GM12878 (cell line): ENCODE measurements at regions of chr4 and their contacts with region 1.

Region 1: GRCh38 chr4:78592104-78592783 is 40.7 kb downstream of the ANXA3 start:
- DNase-seq: no peak
- ATAC-seq: peak; percentile 70
- H3K4me3 ChIP-seq: no peak overlapping the region
- H3K27ac ChIP-seq: no peak overlapping the region
- H3K4me1 ChIP-seq: no peaks in the 10 kb centered on the region
- H3K27me3 ChIP-seq: no peaks in the 10 kb centered on the region
- CTCF ChIP-seq: peak; percentile 34 to 61 (median 55)
- EP300 ChIP-seq: peak in 1 of 2 experiments; percentile 77; a peak in 2 of 4 replicates
- POLR2A ChIP-seq: no peak
- RAD21 ChIP-seq: no peak; the same call in 1 of the 2 replicates

Region 2: GRCh38 chr4:78362310-78362709 is 229.9 kb before region 1 on chr4:
- CTCF ChIA-PET with region 1: no interaction called
- POLR2A ChIA-PET with region 1: no interaction called
- RAD21 ChIA-PET with region 1: no interaction called
- SMC1A ChIA-PET with region 1: no interaction called
- in situ Hi-C with region 1: no loop called
- intact Hi-C with region 1: no loop called
- DNase-seq: no peak
- ATAC-seq: no peak
- H3K4me3 ChIP-seq: no peak overlapping the region
- H3K27ac ChIP-seq: no peak overlapping the region
- H3K4me1 ChIP-seq: no peaks in the 10 kb centered on the region
- H3K27me3 ChIP-seq: no peaks in the 10 kb centered on the region; a peak in 1 of 4 replicates
- CTCF ChIP-seq: no peak
- EP300 ChIP-seq: no peak
- POLR2A ChIP-seq: no peak
- RAD21 ChIP-seq: no peak

Region 3: GRCh38 chr4:78569291-78569821 is 22.9 kb before region 1 on chr4:
- CTCF ChIA-PET with region 1: interaction called, 19 read pairs
- POLR2A ChIA-PET with region 1: interaction called, 5 read pairs
- RAD21 ChIA-PET with region 1: interaction called, 29 read pairs
- SMC1A ChIA-PET with region 1: interaction called, 69 read pairs
- in situ Hi-C with region 1: no loop called
- intact Hi-C with region 1: no loop called
- DNase-seq: no peak
- ATAC-seq: no peak
- H3K4me3 ChIP-seq: no peak overlapping the region
- H3K27ac ChIP-seq: no peak overlapping the region
- H3K4me1 ChIP-seq: peaks cover 6% of the 10 kb centered on the region
- H3K27me3 ChIP-seq: no peaks in the 10 kb centered on the region
- CTCF ChIP-seq: no peak
- EP300 ChIP-seq: no peak
- POLR2A ChIP-seq: no peak
- RAD21 ChIP-seq: no peak

Region 4: DNA sequence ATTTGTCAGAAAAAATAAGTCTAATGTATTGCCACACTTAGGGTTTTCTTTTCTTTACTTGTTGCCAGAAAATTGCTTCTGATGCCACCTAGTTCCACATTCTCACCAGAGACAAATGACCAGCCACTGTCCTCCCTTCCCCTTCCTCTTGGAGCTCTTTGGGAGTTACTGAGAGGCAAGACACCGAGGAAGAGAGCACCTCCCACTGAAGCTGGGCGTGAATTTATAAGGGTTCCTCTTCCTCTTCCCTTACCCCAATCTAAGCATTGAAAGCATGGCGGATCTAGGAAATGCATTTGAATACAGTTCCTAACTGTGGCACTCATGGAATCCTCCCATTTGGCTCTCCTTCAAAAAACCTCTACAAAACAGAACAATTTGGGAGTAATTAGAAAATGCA is 10.6 kb before region 1 on chr4:
- CTCF ChIA-PET with region 1: interaction called, 8 read pairs
- POLR2A ChIA-PET with region 1: interaction called, 5 read pairs
- RAD21 ChIA-PET with region 1: no interaction called
- SMC1A ChIA-PET with region 1: interaction called, 20 read pairs
- in situ Hi-C with region 1: no loop called
- intact Hi-C with region 1: no loop called
- DNase-seq: no peak
- ATAC-seq: no peak
- H3K4me3 ChIP-seq: no peak overlapping the region
- H3K27ac ChIP-seq: no peak overlapping the region
- H3K4me1 ChIP-seq: no peaks in the 10 kb centered on the region
- H3K27me3 ChIP-seq: no peaks in the 10 kb centered on the region
- CTCF ChIP-seq: no peak
- EP300 ChIP-seq: no peak
- POLR2A ChIP-seq: no peak
- RAD21 ChIP-seq: no peak

Region 5: GRCh38 chr4:78766650-78767049 is 174.4 kb after region 1 on chr4:
- CTCF ChIA-PET with region 1: no interaction called
- POLR2A ChIA-PET with region 1: no interaction called
- RAD21 ChIA-PET with region 1: no interaction called
- SMC1A ChIA-PET with region 1: no interaction called
- in situ Hi-C with region 1: no loop called
- intact Hi-C with region 1: no loop called
- DNase-seq: no peak
- ATAC-seq: peak; percentile 92
- H3K4me3 ChIP-seq: peak overlapping the region; percentile 14; the same call in 1 of the 2 replicates
- H3K27ac ChIP-seq: no peak overlapping the region
- H3K4me1 ChIP-seq: peaks cover 27% of the 10 kb centered on the region
- H3K27me3 ChIP-seq: no peaks in the 10 kb centered on the region
- CTCF ChIP-seq: no peak
- EP300 ChIP-seq: no peak
- POLR2A ChIP-seq: no peak
- RAD21 ChIP-seq: no peak

Region 6: DNA sequence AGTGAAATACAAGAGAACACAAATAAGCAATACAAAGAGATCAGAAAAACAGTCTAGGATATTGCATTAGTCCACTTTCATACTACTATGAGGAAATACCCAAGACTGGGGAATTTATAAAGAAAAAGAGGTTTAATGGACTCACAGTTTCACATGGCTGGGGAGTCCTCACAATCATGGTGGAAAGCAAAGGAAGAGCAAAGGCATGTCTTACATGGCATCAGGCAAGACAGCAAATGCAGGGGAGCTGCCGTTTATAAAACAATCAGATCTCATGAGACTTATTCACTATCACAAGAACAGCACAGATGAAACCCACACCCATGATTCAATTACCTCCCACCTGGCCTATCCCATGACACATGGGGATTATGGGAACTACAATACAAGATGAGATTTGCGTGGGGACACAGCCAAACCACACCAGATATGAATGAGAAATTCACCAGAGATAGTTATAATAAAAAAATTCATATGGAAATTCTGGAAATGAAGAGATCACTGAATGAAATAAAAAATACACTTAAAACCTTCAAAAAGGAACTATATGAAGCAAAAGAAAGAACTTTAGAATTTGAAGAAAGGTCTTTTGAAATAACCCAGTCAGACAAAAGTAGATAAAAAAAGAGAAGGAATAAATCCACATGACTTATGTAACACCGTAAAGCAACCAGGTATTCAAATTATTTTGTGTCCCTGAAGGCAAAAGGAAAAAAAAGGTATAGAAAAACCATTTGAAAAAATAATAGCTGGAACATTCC is 749.8 kb after region 1 on chr4:
- CTCF ChIA-PET with region 1: no interaction called
- POLR2A ChIA-PET with region 1: no interaction called
- RAD21 ChIA-PET with region 1: no interaction called
- SMC1A ChIA-PET with region 1: no interaction called
- in situ Hi-C with region 1: no loop called
- intact Hi-C with region 1: no loop called
- DNase-seq: no peak
- ATAC-seq: no peak
- H3K4me3 ChIP-seq: no peak overlapping the region
- H3K27ac ChIP-seq: no peak overlapping the region
- H3K4me1 ChIP-seq: no peaks in the 10 kb centered on the region
- H3K27me3 ChIP-seq: no peaks in the 10 kb centered on the region
- CTCF ChIP-seq: no peak
- EP300 ChIP-seq: no peak
- POLR2A ChIP-seq: no peak
- RAD21 ChIP-seq: no peak